ENCODE measurements at regions of chr9 and their contacts with region 1.

Region 1: GRCh38 chr9:33498387-33498786 is 24.7 kb upstream of the NOL6 start:
- DNase-seq: no peak

Region 2: GRCh38 chr9:33480087-33480486 is 18.3 kb before region 1 on chr9:
- intact Hi-C with region 1: no loop called
- DNase-seq: no peak

Region 3: GRCh38 chr9:33638391-33638915 is 140.1 kb after region 1 on chr9:
- intact Hi-C with region 1: loop called in 1 of 2 experiments (anchors 5 kb)
- DNase-seq: no peak